Posterior vena cava (tissue), 2 donors: ENCODE measurements at regions of chr2 and their contacts with region 1.

Region 1: DNA sequence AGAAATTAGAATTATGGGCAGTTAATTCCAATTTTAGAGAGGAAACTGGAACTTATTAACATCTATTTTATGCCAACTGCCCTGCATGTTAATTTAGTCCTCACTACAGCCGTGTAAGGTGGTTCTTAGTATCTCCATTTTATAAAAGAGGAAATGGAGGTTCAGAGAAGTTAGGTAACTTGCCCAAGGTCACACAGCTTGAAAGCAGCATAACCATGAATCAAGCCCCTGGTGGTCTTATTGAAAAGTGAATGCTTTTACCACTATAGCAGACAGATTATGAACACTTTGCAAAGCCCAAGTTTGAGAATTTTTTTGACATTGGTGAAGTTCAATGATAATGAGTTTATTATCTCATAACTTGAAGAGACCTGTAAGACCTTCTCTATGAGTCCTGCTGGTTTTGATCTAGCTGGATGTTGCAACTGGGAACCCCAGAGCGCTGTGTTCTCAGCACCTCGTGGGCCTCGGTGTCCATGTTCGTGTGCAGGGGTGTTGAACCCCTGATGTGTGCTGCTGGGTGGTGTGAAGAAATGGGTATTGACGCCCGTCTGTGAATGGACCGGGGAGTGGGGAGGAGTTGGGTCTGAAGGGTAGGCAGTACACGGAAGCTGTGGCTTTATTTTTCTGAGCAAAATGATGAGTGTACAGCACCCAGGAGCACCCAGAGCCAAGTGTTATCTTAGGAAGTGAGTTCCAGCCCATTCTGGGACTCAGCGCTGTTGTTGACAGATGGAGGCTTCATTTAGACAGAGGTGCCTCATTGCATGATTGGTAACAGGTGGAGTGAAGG is 9.7 kb downstream of the GREB1 start:
- DNase-seq: no peak

Region 2: GRCh38 chr2:11576398-11576797 is 32.9 kb after region 1 on chr2:
- intact Hi-C with region 1: loop called in 1 of 2 experiments (anchors 1 kb)
- DNase-seq: peak; percentile 47